ENCODE measurements at regions of chr19 and their contacts with region 1.

Region 1: GRCh38 chr19:45059278-45059965 is 16.9 kb downstream of the ZNF296 start:
- DNase-seq: peak; percentile 75
- H3K4me3 ChIP-seq: no peak overlapping the region
- H3K27ac ChIP-seq: no peak overlapping the region
- H3K4me1 ChIP-seq: no peaks in the 10 kb centered on the region
- H3K27me3 ChIP-seq: no peaks in the 10 kb centered on the region
- CTCF ChIP-seq: peak; percentile 80 to 84
- POLR2A ChIP-seq: peak; percentile 31

Region 2: DNA sequence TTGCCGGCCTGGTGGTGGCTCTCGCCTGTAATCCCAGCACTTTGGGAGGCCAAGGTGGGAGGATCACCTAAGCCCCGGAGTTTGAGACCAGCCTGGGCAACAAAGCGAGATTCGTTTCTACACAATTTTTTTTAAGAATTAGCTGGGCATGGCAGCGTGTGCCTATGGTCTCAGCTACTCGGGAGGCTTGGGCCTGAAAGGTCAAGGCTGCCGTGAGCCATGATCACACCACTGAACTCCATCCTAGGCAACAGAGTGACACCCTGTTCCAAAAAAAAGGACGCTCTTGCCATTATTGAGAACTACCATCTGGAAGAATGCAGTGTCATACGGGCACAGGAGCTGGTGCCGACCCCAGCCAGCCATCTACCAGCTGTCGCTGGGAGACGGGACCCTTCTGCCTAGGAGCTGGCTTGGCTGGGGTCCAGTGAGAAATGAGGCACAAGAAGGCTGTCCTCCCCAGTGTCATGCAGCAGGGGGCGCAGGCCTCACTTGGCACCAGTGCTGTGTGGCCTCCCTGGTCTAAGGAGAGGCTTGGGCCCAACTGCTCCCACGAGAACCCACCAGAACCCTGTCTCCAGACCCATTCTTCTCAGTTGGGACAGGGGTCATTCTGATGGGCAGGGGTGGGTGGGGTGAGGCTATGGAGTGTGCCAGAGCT is 70.4 kb before region 1 on chr19:
- CTCF ChIA-PET with region 1: interaction called, 31 read pairs
- POLR2A ChIA-PET with region 1: no interaction called
- dilution Hi-C with region 1: no loop called
- intact Hi-C with region 1: loop called (anchors 1 kb)
- DNase-seq: peak; percentile 59
- H3K4me3 ChIP-seq: no peak overlapping the region
- H3K27ac ChIP-seq: no peak overlapping the region
- H3K4me1 ChIP-seq: no peaks in the 10 kb centered on the region
- H3K27me3 ChIP-seq: no peaks in the 10 kb centered on the region
- CTCF ChIP-seq: peak; percentile 55 to 86
- POLR2A ChIP-seq: no peak

Region 3: GRCh38 chr19:45016388-45017319 is 42.8 kb before region 1 on chr19:
- CTCF ChIA-PET with region 1: interaction called, 5 read pairs
- POLR2A ChIA-PET with region 1: no interaction called
- dilution Hi-C with region 1: no loop called
- intact Hi-C with region 1: loop called (anchors 1 kb)
- DNase-seq: peak; percentile 74
- H3K4me3 ChIP-seq: no peak overlapping the region
- H3K27ac ChIP-seq: no peak overlapping the region
- H3K4me1 ChIP-seq: no peaks in the 10 kb centered on the region
- H3K27me3 ChIP-seq: no peaks in the 10 kb centered on the region
- CTCF ChIP-seq: peak; percentile 70 to 76
- POLR2A ChIP-seq: no peak

Region 4: GRCh38 chr19:45049073-45049736 is 10.2 kb before region 1 on chr19:
- CTCF ChIA-PET with region 1: interaction called, 11 read pairs
- POLR2A ChIA-PET with region 1: no interaction called
- dilution Hi-C with region 1: no loop called
- intact Hi-C with region 1: no loop called
- DNase-seq: no peak
- H3K4me3 ChIP-seq: no peak overlapping the region
- H3K27ac ChIP-seq: no peak overlapping the region
- H3K4me1 ChIP-seq: no peaks in the 10 kb centered on the region
- H3K27me3 ChIP-seq: no peaks in the 10 kb centered on the region
- CTCF ChIP-seq: no peak
- POLR2A ChIP-seq: no peak